ENCODE measurements at regions of chr14 and their contacts with region 1.

Region 1: DNA sequence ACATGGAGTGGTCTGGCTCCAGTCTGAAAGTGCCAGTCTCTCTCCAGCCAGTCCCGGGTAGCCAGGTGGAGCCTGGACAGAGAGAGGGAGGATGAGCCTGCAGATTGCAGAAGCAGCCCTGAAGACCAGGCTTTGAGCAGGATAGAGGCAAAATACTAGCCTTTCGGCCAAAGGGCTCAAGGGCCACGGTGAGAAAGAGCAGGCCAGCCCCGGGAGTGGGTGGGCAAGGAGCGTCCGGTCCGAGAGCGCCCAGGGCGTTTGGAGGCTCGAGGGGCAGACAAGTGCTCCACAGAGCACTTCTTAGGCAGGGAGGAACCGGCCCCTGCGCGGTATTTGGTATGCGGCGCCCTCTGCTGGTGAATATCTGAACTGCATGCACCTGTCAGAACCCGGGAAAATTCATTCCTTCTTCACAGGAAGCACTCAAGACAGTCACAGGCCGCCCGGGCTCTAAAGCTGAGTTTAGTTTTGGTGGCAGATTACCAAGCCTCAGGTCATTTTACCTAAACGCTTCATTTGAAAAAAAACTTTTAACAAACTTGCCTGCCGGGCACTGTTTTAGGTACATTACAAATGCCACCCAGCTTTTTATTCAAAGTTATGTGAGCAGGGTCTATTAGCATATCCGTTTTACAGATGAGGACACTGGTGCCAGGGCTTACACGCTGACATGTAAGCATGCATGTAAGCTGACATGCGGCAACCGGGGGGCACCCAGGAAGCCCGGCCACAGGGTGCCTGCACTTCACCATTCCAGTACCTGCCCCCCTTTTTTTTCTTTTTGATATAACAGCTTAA is 21.0 kb upstream of the PSMC1 start:
- DNase-seq: peak; percentile 81
- H3K4me3 Mint-ChIP-seq: no peak overlapping the region
- H3K27ac Mint-ChIP-seq: no peak overlapping the region
- H3K4me1 Mint-ChIP-seq: no peaks in the 10 kb centered on the region
- H3K27me3 Mint-ChIP-seq: peaks cover 10% of the 10 kb centered on the region

Region 2: DNA sequence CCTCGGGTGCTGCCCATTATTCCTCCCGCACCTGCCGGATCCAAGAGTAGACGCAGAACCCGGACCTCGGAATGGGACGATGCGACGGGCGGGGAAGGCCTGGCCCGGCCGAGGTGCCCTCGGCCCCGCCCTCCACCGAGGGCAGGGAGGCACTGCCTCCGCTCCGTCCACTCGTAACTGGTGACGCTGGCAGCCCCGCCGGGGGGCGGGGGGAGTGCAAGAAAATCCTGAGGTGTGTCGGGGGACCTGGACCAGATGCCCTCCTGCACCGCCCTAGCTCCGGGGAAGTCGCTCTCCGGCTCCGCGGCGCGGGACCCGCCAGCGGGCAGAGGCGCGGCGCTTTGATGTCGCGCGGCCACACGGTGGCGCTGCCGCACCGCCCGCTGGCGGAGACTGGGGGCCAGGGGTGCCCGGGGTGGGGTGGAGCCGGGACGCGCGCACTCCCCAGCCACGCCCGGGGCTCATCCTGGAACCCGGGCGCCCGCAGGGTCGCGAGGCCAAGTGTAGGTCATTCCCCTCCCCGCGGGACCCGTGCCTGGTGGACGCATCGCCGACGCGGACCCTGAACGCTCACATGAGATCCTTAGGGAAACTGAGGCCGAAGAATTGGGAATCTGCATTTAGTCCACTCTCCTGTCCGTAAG is 1208.2 kb before region 1 on chr14:
- CTCF ChIA-PET with region 1: interaction called, 4 read pairs
- POLR2A ChIA-PET with region 1: no interaction called
- intact Hi-C with region 1: loop called (anchors 10 kb)
- DNase-seq: peak; percentile 60
- H3K4me3 Mint-ChIP-seq: peak overlapping the region; percentile 50
- H3K27ac Mint-ChIP-seq: no peak overlapping the region
- H3K4me1 Mint-ChIP-seq: peaks cover 2% of the 10 kb centered on the region
- H3K27me3 Mint-ChIP-seq: peaks cover 63% of the 10 kb centered on the region

Region 3: GRCh38 chr14:89936658-89937185 is 298.7 kb before region 1 on chr14:
- CTCF ChIA-PET with region 1: interaction called, 77 read pairs
- POLR2A ChIA-PET with region 1: no interaction called
- intact Hi-C with region 1: loop called (anchors 1 kb)
- DNase-seq: no peak
- H3K4me3 Mint-ChIP-seq: no peak overlapping the region
- H3K27ac Mint-ChIP-seq: no peak overlapping the region
- H3K4me1 Mint-ChIP-seq: peaks cover 6% of the 10 kb centered on the region
- H3K27me3 Mint-ChIP-seq: no peaks in the 10 kb centered on the region

Region 4: DNA sequence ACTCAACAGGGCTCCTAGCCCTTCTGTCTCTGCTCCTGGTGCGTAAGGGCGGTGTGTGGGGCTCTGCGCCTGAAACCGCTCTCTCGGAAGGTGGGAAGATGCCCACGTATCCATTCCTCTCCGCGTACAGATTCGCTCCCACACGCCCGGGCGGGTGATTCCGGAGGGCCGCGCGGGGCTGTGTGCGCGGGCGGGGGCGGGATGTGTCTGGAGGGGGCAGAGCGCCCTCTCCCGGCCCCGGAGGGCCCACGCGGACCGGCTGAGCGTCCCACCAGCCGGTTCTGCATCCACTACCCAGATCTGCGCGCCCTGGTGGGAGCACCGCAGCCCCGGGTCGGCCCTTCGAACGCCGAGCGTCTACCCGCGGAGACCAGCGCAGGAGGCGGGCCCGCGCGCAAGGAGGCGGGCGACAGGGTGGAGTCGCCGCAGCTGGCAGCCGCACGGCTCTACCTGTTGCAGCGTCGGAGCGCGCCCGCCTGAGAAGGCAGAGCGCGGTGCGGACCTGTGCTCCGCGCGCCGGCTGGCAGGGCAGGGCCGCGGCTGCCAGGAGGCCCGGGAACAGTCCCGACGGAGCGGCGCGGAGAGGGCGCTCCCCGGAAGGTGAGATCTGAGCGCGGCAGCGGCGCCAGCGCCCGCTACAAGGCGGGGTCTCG is 174.9 kb before region 1 on chr14:
- CTCF ChIA-PET with region 1: interaction called, 3 read pairs
- POLR2A ChIA-PET with region 1: no interaction called
- intact Hi-C with region 1: loop called (anchors 1 kb)
- DNase-seq: peak; percentile 68
- H3K4me3 Mint-ChIP-seq: peak overlapping the region; percentile 53
- H3K27ac Mint-ChIP-seq: no peak overlapping the region
- H3K4me1 Mint-ChIP-seq: peaks cover 19% of the 10 kb centered on the region
- H3K27me3 Mint-ChIP-seq: peaks cover 57% of the 10 kb centered on the region

Region 5: GRCh38 chr14:90193925-90194324 is 41.5 kb before region 1 on chr14:
- CTCF ChIA-PET with region 1: interaction called, 4 read pairs
- POLR2A ChIA-PET with region 1: no interaction called
- intact Hi-C with region 1: loop called (anchors 2 kb)
- DNase-seq: peak; percentile 33
- H3K4me3 Mint-ChIP-seq: no peak overlapping the region
- H3K27ac Mint-ChIP-seq: no peak overlapping the region
- H3K4me1 Mint-ChIP-seq: no peaks in the 10 kb centered on the region
- H3K27me3 Mint-ChIP-seq: peaks cover 9% of the 10 kb centered on the region

Region 6: DNA sequence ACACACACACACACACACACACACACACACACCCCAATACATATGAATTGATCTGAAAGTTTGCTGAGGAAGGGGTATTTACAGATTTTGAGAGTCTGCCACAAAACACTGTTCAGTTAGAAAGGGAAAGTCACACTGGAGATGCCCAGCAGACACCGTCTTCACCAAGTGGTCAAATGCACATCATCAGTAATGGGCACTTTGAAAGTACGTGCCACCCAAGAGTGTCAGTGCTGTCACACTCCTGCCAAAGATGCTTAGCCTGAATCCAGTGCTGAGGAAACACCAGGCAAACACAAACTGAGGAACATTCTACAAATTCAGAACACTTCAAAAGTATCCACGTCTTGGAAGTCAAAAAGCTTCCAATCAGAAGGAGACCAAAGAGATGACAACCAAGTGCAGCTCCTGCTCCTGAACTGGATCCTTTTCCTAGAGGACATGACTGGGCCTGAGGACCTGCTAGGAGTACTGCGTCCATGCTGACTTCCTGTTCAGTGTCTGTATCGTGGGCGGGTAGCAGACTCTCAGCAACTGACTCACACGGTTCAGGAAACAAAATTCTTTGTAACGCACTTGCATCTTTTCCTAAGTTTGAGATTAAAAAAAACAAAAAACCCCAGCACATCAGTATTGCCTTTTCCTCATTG is 39.6 kb after region 1 on chr14:
- CTCF ChIA-PET with region 1: no interaction called
- POLR2A ChIA-PET with region 1: no interaction called
- intact Hi-C with region 1: no loop called
- DNase-seq: peak; percentile 65
- H3K4me3 Mint-ChIP-seq: peak overlapping the region; percentile 18
- H3K27ac Mint-ChIP-seq: peak overlapping the region; percentile 95
- H3K4me1 Mint-ChIP-seq: peaks cover 22% of the 10 kb centered on the region
- H3K27me3 Mint-ChIP-seq: no peaks in the 10 kb centered on the region